ENCODE measurements at regions of chr12 and their contacts with region 1.

Region 1: GRCh38 chr12:46124848-46125619 is 134.7 kb upstream of the SCAF11 start:
- DNase-seq: peak in 32 of 35 experiments; percentile 17 to 84 (median 42)
- ATAC-seq: peak; percentile 80 to 92 (median 84)
- H3K4me3 ChIP-seq: no peak overlapping the region
- H3K4me3 Mint-ChIP-seq: peak overlapping the region in 2 of 3 donors; percentile 34 to 57
- H3K27ac ChIP-seq: no peak overlapping the region
- H3K27ac Mint-ChIP-seq: peak overlapping the region in 1 of 2 donors; percentile 61
- H3K4me1 ChIP-seq: no peaks in the 10 kb centered on the region
- H3K4me1 Mint-ChIP-seq: peaks cover 2 to 7% (median 3%) of the 10 kb centered on the region in 3 donors
- H3K27me3 ChIP-seq: no peaks in the 10 kb centered on the region
- H3K27me3 Mint-ChIP-seq: peaks cover 3 to 12% of the 10 kb centered on the region in 2 donors

Region 2: GRCh38 chr12:46303039-46303666 is 178.1 kb after region 1 on chr12:
- CTCF ChIA-PET with region 1: interaction called, 16 to 28 read pairs
- POLR2A ChIA-PET with region 1: interaction called in 1 of 2 experiments, 5 read pairs
- DNase-seq: peak in 34 of 35 experiments; percentile 3 to 86 (median 36)
- ATAC-seq: peak; percentile 78 to 87 (median 81)
- H3K4me3 ChIP-seq: no peak overlapping the region
- H3K4me3 Mint-ChIP-seq: no peak overlapping the region
- H3K27ac ChIP-seq: no peak overlapping the region
- H3K27ac Mint-ChIP-seq: no peak overlapping the region
- H3K4me1 ChIP-seq: no peaks in the 10 kb centered on the region
- H3K4me1 Mint-ChIP-seq: peaks cover 3 to 19% (median 6%) of the 10 kb centered on the region in 3 donors
- H3K27me3 ChIP-seq: no peaks in the 10 kb centered on the region
- H3K27me3 Mint-ChIP-seq: no peaks in the 10 kb centered on the region

Region 3: DNA sequence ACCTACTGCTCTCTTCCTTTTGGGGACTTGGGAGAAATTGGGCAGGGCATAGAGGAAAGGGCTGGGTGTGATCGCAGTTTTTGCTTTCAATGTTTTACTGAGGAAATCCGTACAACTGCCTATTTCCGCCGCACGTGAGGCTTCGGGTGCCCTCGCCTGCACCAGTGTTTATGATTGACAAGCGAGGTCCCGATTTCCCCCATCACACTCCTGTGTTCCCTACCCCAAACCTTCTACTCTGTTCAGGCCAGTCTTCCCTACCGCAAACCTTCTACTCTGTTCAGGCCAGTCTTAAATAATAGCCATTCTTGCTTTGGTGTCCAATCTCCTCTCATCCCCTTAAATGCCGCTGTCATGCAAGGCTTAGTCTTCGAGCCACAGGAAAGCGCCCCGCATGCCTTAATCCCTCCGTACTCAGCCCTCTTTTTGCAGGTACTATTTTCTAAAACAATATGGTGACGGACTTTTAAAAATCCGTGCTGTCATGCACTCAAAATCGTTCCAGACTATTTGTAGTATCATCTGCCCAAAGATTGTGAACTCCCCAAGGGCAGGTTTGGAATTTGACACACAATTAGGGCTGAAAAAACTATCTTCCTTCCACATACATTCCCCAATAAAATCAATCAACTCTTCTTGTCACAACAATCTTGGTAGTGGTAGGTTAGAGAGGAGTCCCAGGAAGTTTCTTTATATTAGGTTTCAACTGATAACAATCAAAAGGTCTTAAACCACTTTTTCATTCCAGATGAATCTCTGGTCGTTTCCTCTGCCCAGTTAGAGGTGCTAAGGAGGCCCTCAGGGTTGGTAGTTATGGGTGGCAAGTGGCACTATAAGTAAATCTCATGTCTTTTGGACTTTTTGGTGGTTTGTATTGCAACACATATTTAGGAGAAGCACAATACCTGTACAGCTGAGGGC is 249.0 kb after region 1 on chr12:
- CTCF ChIA-PET with region 1: no interaction called
- POLR2A ChIA-PET with region 1: no interaction called
- DNase-seq: peak in 27 of 35 experiments; percentile 17 to 68 (median 30)
- ATAC-seq: peak in 2 of 4 experiments; percentile 6 to 14
- H3K4me3 ChIP-seq: peak overlapping the region; percentile 55 to 98
- H3K4me3 Mint-ChIP-seq: peak overlapping the region; percentile 98 to 99 (median 98)
- H3K27ac ChIP-seq: peak overlapping the region; percentile 79
- H3K27ac Mint-ChIP-seq: peak overlapping the region; percentile 97 to 99
- H3K4me1 ChIP-seq: peaks cover 15 to 25% of the 10 kb centered on the region in 2 experiments
- H3K4me1 Mint-ChIP-seq: peaks cover 34 to 54% (median 39%) of the 10 kb centered on the region in 3 donors
- H3K27me3 ChIP-seq: no peaks in the 10 kb centered on the region
- H3K27me3 Mint-ChIP-seq: no peaks in the 10 kb centered on the region

Region 4: GRCh38 chr12:46983393-46984266 is 858.6 kb after region 1 on chr12:
- CTCF ChIA-PET with region 1: interaction called, 3 to 10 read pairs
- POLR2A ChIA-PET with region 1: no interaction called
- DNase-seq: peak in 25 of 35 experiments; percentile 3 to 59 (median 18)
- ATAC-seq: peak; percentile 52 to 71 (median 63)
- H3K4me3 ChIP-seq: no peak overlapping the region
- H3K4me3 Mint-ChIP-seq: no peak overlapping the region
- H3K27ac ChIP-seq: no peak overlapping the region
- H3K27ac Mint-ChIP-seq: no peak overlapping the region
- H3K4me1 ChIP-seq: peaks cover 0 to 6% of the 10 kb centered on the region in 2 experiments
- H3K4me1 Mint-ChIP-seq: peaks cover 0 to 8% (median 6%) of the 10 kb centered on the region in 3 donors
- H3K27me3 ChIP-seq: peaks cover 0 to 11% of the 10 kb centered on the region in 2 experiments
- H3K27me3 Mint-ChIP-seq: peaks cover 24 to 32% of the 10 kb centered on the region in 2 donors

Region 5: GRCh38 chr12:47021298-47021697 is 896.3 kb after region 1 on chr12:
- CTCF ChIA-PET with region 1: interaction called, 15 to 34 read pairs
- POLR2A ChIA-PET with region 1: no interaction called
- DNase-seq: peak in 3 of 35 experiments; percentile 3 to 71 (median 26)
- ATAC-seq: peak in 1 of 4 experiments; percentile 48
- H3K4me3 ChIP-seq: no peak overlapping the region
- H3K4me3 Mint-ChIP-seq: no peak overlapping the region
- H3K27ac ChIP-seq: no peak overlapping the region
- H3K27ac Mint-ChIP-seq: no peak overlapping the region
- H3K4me1 ChIP-seq: no peaks in the 10 kb centered on the region
- H3K4me1 Mint-ChIP-seq: no peaks in the 10 kb centered on the region
- H3K27me3 ChIP-seq: peaks cover 0 to 9% of the 10 kb centered on the region in 2 experiments
- H3K27me3 Mint-ChIP-seq: peaks cover 19 to 33% of the 10 kb centered on the region in 2 donors

Measured in T-cell (primary cell).